GM10248 (cell line): ENCODE measurements at regions of chr12 and their contacts with region 1.

Region 1: GRCh38 chr12:113098446-113098896 is 37.1 kb downstream of the RASAL1 start:
- DNase-seq: peak; percentile 83
- CTCF ChIP-seq: peak; percentile 88

Region 2: GRCh38 chr12:112992541-112993398 is 105.7 kb before region 1 on chr12:
- CTCF ChIA-PET with region 1: interaction called, 17 read pairs
- POLR2A ChIA-PET with region 1: no interaction called
- DNase-seq: peak; percentile 67
- CTCF ChIP-seq: peak; percentile 73

Region 3: GRCh38 chr12:113056631-113057488 is 41.6 kb before region 1 on chr12 and contains the start of gene DTX1:
- CTCF ChIA-PET with region 1: interaction called, 107 read pairs
- POLR2A ChIA-PET with region 1: no interaction called
- DNase-seq: peak; percentile 31
- CTCF ChIP-seq: no peak

Region 4: DNA sequence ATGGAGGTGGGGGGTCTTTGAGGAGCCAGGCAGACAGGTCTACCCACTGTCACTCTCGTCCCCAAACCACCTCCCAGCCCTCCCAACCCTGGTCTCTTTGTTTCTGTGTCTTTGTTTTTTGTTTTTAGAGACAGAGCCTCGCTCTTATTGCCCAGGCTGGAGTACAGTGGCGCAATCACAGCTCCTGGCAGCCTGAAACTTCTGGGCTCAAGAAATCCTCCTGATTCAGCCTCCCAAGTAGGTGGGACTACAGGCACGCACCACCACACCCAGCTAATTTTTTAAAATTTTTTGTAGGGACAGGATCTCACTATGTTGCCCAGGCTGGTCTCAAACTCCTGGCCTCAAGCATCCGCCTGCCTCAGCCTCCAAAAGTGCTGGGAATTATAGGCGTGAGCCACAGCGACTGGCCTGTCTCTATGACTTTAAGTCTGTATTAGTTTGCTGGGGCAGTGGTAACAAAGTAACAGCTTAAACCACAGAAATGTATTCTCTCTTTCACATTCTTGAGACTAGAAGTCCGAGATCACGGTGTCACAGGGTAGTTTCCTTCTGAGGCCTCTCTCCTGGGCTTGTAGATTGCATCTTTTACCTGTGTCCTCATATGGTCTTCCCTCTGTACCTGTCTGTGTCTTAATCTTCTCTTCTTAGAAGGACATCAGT is 15.9 kb before region 1 on chr12:
- CTCF ChIA-PET with region 1: interaction called, 16 read pairs
- POLR2A ChIA-PET with region 1: interaction called, 3 read pairs
- DNase-seq: peak; percentile 62
- CTCF ChIP-seq: no peak

Region 5: GRCh38 chr12:113152835-113153814 is 54.7 kb after region 1 on chr12:
- CTCF ChIA-PET with region 1: interaction called, 14 read pairs
- POLR2A ChIA-PET with region 1: no interaction called
- DNase-seq: peak; percentile 84
- CTCF ChIP-seq: peak; percentile 56